ENCODE measurements at regions of chr10 and their contacts with region 1.

Region 1: DNA sequence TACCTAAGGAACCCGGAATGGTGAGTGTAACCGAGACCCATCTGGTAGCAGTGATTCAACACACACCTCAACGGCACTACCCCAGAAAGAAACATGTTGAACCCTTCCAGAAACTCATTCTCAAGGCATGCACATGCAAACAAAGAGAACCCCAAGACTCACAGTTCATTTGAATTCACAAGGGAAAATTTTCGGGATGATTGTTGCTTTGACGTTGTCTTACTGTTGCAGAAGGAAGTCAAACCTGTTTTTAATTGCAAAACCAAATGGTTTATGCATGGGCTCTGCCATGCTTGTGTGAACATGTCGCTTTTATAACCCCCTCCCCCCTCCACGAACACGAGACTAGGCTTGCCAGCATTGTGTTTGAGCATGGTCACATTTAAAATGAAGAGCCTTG is 539.7 kb downstream of the GATA3 start:
- DNase-seq: no peak
- H3K4me3 ChIP-seq: no peak overlapping the region
- H3K4me3 Mint-ChIP-seq: no peak overlapping the region
- H3K27ac Mint-ChIP-seq: no peak overlapping the region
- H3K4me1 ChIP-seq: peaks cover 9% of the 10 kb centered on the region
- H3K4me1 Mint-ChIP-seq: peaks cover 12% of the 10 kb centered on the region
- H3K27me3 ChIP-seq: no peaks in the 10 kb centered on the region
- H3K27me3 Mint-ChIP-seq: no peaks in the 10 kb centered on the region
- CTCF ChIP-seq: no peak

Region 2: DNA sequence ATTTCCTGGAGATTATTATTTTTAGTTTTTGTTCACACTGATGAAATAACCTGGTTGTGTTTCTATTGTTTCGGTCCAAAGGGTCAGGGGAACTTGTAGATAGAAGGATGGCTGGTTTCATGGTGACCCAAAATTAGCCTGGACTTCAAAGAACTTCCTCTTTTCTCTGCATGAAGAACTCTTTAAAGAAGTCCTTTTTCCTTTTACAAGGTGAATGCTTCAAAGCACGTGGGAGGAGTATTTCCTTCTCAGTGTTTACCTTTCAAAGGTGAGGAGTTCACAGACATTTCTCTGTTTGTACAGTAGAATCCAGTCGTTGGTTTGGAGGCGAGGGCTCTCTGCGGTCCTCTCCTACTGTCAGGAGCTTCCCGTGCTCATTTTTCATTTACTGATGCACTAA is 22.0 kb after region 1 on chr10:
- CTCF ChIA-PET with region 1: no interaction called
- POLR2A ChIA-PET with region 1: no interaction called
- intact Hi-C with region 1: loop called (anchors 2 kb)
- DNase-seq: peak; percentile 61 to 65
- H3K4me3 ChIP-seq: no peak overlapping the region
- H3K4me3 Mint-ChIP-seq: peak overlapping the region; percentile 12
- H3K27ac Mint-ChIP-seq: peak overlapping the region; percentile 40
- H3K4me1 ChIP-seq: peaks cover 23% of the 10 kb centered on the region
- H3K4me1 Mint-ChIP-seq: peaks cover 7% of the 10 kb centered on the region
- H3K27me3 ChIP-seq: no peaks in the 10 kb centered on the region
- H3K27me3 Mint-ChIP-seq: no peaks in the 10 kb centered on the region
- CTCF ChIP-seq: no peak

Region 3: DNA sequence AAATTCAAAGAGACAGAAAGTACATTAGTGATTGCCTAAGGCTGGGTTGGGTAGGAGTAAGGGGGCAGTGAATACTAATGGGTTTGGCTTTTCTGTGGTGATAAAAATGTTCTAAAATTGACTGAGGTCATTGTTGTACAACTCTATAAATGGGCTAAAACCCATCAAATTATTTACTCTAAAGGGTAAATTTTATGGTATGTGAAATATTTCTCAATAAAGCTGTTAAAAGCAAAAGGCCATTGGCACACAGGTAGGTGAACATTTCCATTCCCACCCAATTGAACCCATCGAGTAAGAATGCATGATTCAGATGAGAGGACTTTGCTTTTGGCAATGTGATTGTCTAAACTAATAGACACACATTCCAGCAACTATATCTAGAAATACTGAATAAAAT is 39.7 kb after region 1 on chr10:
- CTCF ChIA-PET with region 1: no interaction called
- POLR2A ChIA-PET with region 1: no interaction called
- intact Hi-C with region 1: loop called (anchors 1 kb)
- DNase-seq: no peak
- H3K4me3 ChIP-seq: no peak overlapping the region
- H3K4me3 Mint-ChIP-seq: no peak overlapping the region
- H3K27ac Mint-ChIP-seq: no peak overlapping the region
- H3K4me1 ChIP-seq: no peaks in the 10 kb centered on the region
- H3K4me1 Mint-ChIP-seq: peaks cover 1% of the 10 kb centered on the region
- H3K27me3 ChIP-seq: no peaks in the 10 kb centered on the region
- H3K27me3 Mint-ChIP-seq: peaks cover 5% of the 10 kb centered on the region
- CTCF ChIP-seq: no peak